ENCODE measurements at regions of chr3 and their contacts with region 1.

Region 1: GRCh38 chr3:48548729-48549705 is 7.6 kb downstream of the PFKFB4 start:
- DNase-seq: peak; percentile 94
- ATAC-seq: peak; percentile 94

Region 2: GRCh38 chr3:48464713-48465221 is 84.2 kb before region 1 on chr3:
- intact Hi-C with region 1: loop called (anchors 5 kb)
- DNase-seq: peak; percentile 68
- ATAC-seq: no peak

Region 3: DNA sequence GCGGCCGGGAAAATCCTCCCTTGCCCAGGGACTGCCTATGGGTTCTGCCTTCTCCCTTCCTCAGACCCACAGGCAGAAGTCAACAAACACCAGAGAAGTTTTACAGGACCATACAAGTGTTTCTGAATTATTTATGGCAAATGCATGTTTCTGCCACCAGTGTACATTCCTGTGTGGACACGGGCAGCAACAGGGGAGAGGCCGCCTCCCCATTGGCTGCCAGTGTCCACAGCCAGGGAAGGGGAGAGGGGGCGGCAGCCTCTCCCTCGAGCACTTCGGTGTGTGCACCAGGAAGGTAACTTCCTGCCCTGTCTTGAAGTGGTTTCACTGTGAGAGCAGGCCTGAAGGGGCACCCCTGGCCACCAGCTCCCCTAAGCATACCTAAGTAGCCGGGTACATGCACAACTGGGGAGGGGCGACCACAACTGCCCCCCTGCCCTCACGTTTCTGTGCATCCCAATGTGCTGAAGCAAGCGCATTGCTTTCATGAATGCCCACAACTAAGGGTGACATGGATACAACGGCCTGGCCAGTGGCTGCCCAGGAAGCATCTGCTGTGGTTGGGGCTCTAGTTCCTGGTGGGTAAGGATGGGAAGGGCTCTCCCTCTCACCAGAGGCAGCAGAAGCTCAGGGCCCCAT is 30.3 kb before region 1 on chr3:
- intact Hi-C with region 1: no loop called
- DNase-seq: no peak
- ATAC-seq: no peak

Measured in sciatic nerve (tissue), 2 donors.